Motor neuron (in vitro differentiated cells): ENCODE measurements at regions of chr9 and their contacts with region 1.

Region 1: DNA sequence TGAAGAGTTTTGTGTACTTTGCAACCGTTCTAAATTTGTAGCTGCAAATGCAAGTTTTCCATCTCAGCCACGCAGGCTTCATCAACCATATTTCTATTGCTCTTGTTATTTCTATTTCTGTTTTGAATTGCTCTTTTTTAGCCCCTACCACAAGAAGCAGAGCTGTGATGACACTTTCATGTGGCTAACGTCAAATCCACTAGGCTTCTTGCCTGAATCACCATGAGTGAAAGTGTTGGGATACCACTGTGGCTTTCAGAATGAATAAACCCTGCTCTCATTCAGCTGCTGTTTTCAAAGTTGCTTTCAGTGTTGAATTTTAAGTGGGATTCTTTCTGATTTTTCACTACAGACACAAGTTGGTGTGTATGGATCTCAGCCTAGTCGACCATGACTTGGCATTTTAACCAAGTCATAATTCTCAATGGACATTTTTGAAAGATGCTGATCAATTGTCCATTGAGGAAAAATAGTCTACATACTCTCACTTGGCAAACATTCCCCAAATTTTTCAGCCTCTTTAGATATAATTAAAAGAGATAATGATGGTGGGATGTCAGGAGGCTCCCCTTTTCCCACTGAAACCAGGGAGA is 41.0 kb upstream of the MTAP start:
- ATAC-seq: no peak
- H3K4me3 ChIP-seq: no peak overlapping the region
- H3K27ac ChIP-seq: no peak overlapping the region
- H3K4me1 ChIP-seq: no peaks in the 10 kb centered on the region

Region 2: GRCh38 chr9:21454149-21454548 is 307.3 kb before region 1 on chr9:
- in situ Hi-C with region 1: no loop called
- ATAC-seq: peak in 2 of 8 experiments; percentile 73 to 74
- H3K4me3 ChIP-seq: no peak overlapping the region
- H3K27ac ChIP-seq: no peak overlapping the region
- H3K4me1 ChIP-seq: no peaks in the 10 kb centered on the region

Region 3: GRCh38 chr9:21506626-21507484 is 254.6 kb before region 1 on chr9:
- in situ Hi-C with region 1: loop called in 1 of 9 experiments (anchors 25 kb)
- ATAC-seq: peak in 2 of 8 experiments; percentile 65 to 80
- H3K4me3 ChIP-seq: no peak overlapping the region
- H3K27ac ChIP-seq: no peak overlapping the region
- H3K4me1 ChIP-seq: no peaks in the 10 kb centered on the region

Region 4: DNA sequence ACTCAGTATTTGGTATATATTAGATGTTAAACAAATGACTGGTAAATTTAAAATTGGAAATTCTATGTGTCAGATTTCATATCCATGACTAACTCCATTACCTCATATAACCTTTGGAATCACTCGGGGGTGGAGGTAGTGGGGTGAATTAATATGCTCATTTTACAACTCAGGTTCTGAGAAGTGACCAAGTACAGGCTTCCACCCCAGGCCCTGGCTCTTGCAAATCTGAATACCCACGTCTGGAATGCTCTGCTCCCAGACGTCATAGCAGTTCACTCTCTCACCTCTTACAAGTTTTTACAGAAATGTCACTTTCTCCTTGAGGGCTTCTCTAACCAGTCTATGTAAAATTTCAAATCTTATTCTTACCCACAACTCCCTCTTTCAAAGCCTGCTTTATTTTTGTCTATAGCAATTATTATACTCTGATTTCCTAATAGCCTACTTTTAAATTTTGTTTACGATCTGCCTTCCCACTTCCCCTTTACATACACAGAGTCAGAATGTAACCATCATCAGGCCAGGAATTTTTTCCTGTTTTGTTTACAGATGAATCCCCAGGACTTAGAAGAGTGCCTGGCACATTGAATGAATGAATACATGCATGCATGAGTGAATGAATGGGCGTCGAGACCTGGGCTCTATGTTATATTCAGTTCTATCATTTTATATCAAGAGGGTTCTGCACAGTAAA is 145.2 kb before region 1 on chr9:
- in situ Hi-C with region 1: no loop called
- ATAC-seq: peak in 3 of 8 experiments; percentile 46 to 97 (median 94)
- H3K4me3 ChIP-seq: no peak overlapping the region
- H3K27ac ChIP-seq: no peak overlapping the region
- H3K4me1 ChIP-seq: no peaks in the 10 kb centered on the region

Region 5: GRCh38 chr9:21656776-21657674 is 104.4 kb before region 1 on chr9:
- in situ Hi-C with region 1: loop called in 1 of 9 experiments (anchors 25 kb)
- ATAC-seq: peak in 2 of 8 experiments; percentile 52 to 65
- H3K4me3 ChIP-seq: no peak overlapping the region
- H3K27ac ChIP-seq: no peak overlapping the region
- H3K4me1 ChIP-seq: no peaks in the 10 kb centered on the region